A549 (cell line): ENCODE measurements at regions of chr17 and their contacts with region 1.

Region 1: DNA sequence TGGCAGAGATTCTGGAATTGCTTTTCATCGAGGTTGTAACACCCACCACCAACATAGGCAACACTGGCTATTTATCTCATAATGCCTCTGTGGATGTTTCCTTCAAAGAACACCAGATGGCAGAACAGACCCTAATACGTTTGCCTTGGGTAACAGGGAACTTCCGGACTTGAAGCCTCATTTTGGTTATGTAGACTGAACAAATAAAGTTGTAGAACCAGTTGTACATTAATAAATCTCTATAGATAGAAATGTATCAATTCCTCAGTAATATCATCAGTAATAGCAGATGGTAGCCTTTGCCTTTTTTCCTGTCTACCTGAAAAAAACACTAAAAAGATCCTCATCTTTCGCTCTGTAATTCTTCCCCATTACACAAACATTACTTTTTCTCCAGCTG is 25.9 kb upstream of the APOH start:
- DNase-seq: peak in 1 of 2 experiments; percentile 88
- ATAC-seq: peak; percentile 94 to 96
- H3K4me3 ChIP-seq: no peak overlapping the region
- H3K27ac ChIP-seq: peak overlapping the region; percentile 41 to 56; a peak in 3 of 6 replicates
- H3K4me1 ChIP-seq: peaks cover 8% of the 10 kb centered on the region; the same call in 2 of the 3 replicates
- CTCF ChIP-seq: peak; percentile 98
- EP300 ChIP-seq: no peak
- POLR2A ChIP-seq: no peak
- RAD21 ChIP-seq: peak; percentile 99 to 100

Region 2: DNA sequence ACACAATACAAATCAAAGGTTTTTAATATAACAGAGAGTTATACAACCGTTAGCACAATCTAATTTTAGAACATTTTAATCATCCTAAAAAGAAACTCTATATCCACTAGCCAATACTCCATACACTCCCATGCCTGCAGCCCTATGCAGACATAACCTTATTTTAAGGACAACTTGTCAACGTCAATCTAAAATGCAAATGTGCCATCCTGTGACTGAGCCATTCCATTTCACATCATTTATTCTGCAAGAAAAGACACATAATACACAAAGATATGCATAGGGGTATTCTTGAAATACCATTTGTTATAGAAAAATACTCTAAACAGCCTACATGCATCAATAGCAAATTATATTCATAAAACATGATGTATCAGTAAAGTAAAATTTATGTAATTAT is 169.9 kb before region 1 on chr17:
- CTCF ChIA-PET with region 1: no interaction called
- POLR2A ChIA-PET with region 1: no interaction called
- DNase-seq: no peak
- ATAC-seq: no peak
- H3K4me3 ChIP-seq: no peak overlapping the region
- H3K27ac ChIP-seq: no peak overlapping the region
- H3K4me1 ChIP-seq: no peaks in the 10 kb centered on the region
- CTCF ChIP-seq: no peak
- EP300 ChIP-seq: no peak
- POLR2A ChIP-seq: no peak
- RAD21 ChIP-seq: no peak

Region 3: DNA sequence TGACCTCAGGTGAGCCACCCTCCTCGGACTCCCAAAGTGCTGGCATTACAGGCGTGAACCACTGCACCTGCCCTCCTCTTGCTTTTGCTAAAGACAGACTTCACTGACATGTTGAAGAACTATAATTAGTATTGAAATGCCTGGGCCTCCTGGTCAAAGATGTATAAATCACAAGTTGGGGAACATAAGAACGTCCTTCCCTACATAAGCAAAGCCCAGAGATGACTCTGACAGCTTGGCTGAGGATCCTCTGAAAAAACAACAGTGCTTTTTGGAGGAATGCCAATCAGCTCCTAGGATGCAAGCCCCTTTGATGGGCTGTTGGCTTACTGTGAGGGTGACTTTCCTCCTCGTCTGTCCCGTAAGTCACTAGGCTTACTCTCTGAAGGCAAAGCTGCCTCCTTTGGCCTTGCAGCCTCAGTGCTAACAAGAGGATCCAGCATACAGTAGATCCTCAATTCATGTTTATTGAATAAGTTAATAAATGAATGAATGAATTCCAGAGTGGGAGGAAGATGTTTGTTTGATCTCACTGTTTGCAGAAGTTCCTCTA is 32.2 kb before region 1 on chr17:
- CTCF ChIA-PET with region 1: no interaction called
- POLR2A ChIA-PET with region 1: no interaction called
- DNase-seq: no peak
- ATAC-seq: peak in 1 of 2 experiments; percentile 40; a peak in 3 of 6 replicates
- H3K4me3 ChIP-seq: no peak overlapping the region
- H3K27ac ChIP-seq: peak overlapping the region; percentile 1 to 54; a peak in 3 of 6 replicates
- H3K4me1 ChIP-seq: peaks cover 16% of the 10 kb centered on the region
- CTCF ChIP-seq: no peak
- EP300 ChIP-seq: no peak
- POLR2A ChIP-seq: no peak
- RAD21 ChIP-seq: no peak

Region 4: DNA sequence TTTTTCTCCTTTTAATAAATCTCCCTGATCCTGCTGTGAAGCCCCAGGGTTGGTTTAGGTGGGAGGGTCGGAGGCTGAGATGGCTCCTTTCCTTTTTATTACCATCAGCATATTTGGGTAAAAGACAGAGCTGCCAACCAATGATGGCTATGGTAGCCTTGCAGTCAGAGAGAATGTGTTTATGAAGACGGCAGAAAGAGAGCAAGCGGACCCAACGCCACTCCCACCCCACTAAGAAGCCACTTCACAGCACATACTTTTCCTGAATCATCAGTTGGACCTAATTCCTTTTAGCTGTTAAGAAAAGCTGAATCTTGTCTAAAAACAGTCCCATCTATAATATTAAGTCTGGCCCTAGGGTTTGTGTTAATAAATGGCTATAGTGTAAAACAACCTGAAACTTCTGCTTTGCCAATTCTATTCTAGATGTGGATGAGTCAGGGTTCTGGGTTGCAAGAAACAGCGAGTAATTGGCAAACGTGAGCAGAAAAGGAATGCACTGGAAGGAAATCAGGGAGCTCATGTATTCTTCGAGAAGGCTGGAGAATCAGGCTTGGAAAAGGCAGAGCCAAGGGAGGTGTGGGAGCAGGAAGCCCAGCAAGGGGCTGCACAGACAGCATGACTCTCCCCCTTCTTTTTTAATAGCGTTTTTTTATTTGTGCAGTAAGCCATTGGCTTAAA is 13.3 kb after region 1 on chr17:
- CTCF ChIA-PET with region 1: interaction called, 31 read pairs
- POLR2A ChIA-PET with region 1: interaction called, 3 read pairs
- DNase-seq: no peak
- ATAC-seq: peak; percentile 40 to 60; a peak in 5 of 6 replicates
- H3K4me3 ChIP-seq: no peak overlapping the region
- H3K27ac ChIP-seq: peak overlapping the region; percentile 34 to 78
- H3K4me1 ChIP-seq: peaks cover 28% of the 10 kb centered on the region
- CTCF ChIP-seq: no peak
- EP300 ChIP-seq: no peak
- POLR2A ChIP-seq: no peak
- RAD21 ChIP-seq: no peak

Region 5: GRCh38 chr17:66275651-66276050 is 20.5 kb after region 1 on chr17:
- CTCF ChIA-PET with region 1: interaction called, 31 read pairs
- POLR2A ChIA-PET with region 1: interaction called, 3 read pairs
- DNase-seq: peak; percentile 97 to 98
- ATAC-seq: peak; percentile 94 to 97
- H3K4me3 ChIP-seq: no peak overlapping the region
- H3K27ac ChIP-seq: peak overlapping the region; percentile 91 to 92
- H3K4me1 ChIP-seq: peaks cover 59% of the 10 kb centered on the region
- CTCF ChIP-seq: peak; percentile 48
- EP300 ChIP-seq: peak; percentile 95 to 97
- POLR2A ChIP-seq: no peak
- RAD21 ChIP-seq: peak; percentile 70 to 87

Region 6: DNA sequence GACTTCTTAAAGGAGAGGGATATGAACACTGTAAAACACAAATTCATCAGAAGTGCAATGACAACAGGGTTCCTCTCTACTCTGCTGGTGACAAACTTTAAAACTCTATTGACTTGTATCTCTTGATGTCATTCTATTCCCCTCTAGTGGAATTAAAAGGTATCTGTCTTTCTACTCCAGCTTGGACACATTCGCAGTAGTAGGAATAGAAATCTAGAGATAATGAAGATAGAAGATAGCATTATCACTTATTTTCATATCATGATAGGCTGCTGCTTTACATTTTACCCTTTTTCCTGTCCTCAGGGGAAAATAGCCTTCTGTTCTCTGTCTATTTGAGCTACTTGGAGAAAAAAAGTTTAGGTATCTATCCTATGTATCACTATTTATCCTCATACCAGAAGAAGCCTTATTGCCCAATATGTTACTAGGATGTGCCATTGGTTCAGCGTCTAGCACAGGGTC is 370.2 kb after region 1 on chr17:
- CTCF ChIA-PET with region 1: interaction called, 10 read pairs
- POLR2A ChIA-PET with region 1: no interaction called
- DNase-seq: peak; percentile 67 to 85
- ATAC-seq: peak; percentile 87 to 94
- H3K4me3 ChIP-seq: no peak overlapping the region
- H3K27ac ChIP-seq: no peak overlapping the region
- H3K4me1 ChIP-seq: peaks cover 8% of the 10 kb centered on the region; the same call in 2 of the 3 replicates
- CTCF ChIP-seq: peak; percentile 91
- EP300 ChIP-seq: no peak
- POLR2A ChIP-seq: no peak
- RAD21 ChIP-seq: peak; percentile 90 to 94

Region 7: DNA sequence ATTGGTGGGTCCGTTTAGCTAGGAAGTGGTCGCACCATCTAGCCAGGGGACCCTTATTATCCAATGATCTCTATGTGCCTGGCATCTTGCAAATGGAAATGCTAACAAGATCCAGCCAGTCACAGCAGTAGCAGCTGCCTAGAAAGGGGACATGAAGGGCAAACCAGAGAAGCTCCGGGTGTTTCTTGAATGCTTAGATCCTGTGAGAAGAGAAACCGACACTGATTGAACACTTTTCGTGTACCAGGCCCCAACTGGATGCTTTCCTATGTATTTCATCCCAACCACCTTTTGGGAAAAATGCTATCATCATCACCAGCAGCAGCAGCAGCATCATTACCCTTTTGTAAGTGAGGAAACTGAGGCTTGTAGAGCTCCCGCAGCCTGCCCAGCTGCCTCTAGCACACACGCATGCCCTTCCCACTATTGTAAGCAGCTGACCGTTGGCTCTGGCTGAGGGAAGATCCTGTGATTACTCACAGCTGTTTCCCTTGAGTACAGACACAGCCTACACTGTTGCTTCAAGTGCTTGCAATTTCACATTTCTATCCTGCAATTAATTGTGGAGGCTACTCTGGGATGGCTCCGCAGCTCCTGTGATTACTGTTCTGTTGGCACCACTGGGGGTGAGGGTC is 399.1 kb after region 1 on chr17:
- CTCF ChIA-PET with region 1: interaction called, 11 read pairs
- POLR2A ChIA-PET with region 1: no interaction called
- DNase-seq: no peak
- ATAC-seq: no peak
- H3K4me3 ChIP-seq: no peak overlapping the region
- H3K27ac ChIP-seq: no peak overlapping the region
- H3K4me1 ChIP-seq: no peaks in the 10 kb centered on the region
- CTCF ChIP-seq: no peak
- EP300 ChIP-seq: no peak
- POLR2A ChIP-seq: no peak
- RAD21 ChIP-seq: no peak

Region 8: DNA sequence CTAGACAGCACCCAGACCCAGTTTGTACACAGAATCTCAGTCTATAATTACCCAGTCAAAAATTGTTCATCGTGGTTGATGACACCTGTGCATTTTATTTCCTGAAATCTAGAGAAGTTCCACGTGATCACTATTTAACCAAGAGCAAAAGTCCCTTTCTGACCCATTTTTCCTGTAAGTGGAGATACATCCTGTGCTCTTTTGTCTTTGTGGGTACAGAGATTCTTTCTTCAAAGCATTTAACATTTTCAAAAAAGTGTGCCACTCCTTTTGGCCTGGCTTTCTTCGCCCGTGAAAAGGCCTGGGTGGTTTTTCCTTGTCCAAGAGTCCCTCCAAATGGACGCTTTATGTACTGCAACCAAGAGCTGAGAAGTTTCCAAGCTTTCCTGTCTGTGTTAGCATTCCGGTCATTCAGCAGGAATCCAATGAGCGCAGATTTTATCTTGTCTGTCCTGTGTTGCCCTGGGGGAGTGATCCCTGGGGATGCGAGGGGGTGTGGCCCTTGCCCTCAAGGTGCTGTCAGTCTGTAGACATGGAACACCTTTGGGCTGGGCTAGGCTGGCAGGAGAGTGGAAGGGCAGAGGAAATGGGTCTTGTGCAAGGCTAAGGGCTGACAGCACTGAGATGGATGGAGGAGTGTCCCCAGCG is 418.7 kb after region 1 on chr17:
- CTCF ChIA-PET with region 1: interaction called, 36 read pairs
- POLR2A ChIA-PET with region 1: no interaction called
- DNase-seq: peak; percentile 62 to 80
- ATAC-seq: peak; percentile 57 to 77; a peak in 5 of 6 replicates
- H3K4me3 ChIP-seq: no peak overlapping the region
- H3K27ac ChIP-seq: peak overlapping the region; percentile 63 to 72; a peak in 5 of 6 replicates
- H3K4me1 ChIP-seq: peaks cover 40% of the 10 kb centered on the region
- CTCF ChIP-seq: peak; percentile 91
- EP300 ChIP-seq: no peak
- POLR2A ChIP-seq: no peak
- RAD21 ChIP-seq: peak; percentile 97